ENCODE measurements at regions of chr11 and their contacts with region 1.

Region 1: GRCh38 chr11:28274216-28274615 is 166.0 kb downstream of the METTL15 start:
- DNase-seq: no peak
- ATAC-seq: no peak
- H3K4me3 ChIP-seq: no peak overlapping the region
- H3K27ac ChIP-seq: no peak overlapping the region
- H3K4me1 ChIP-seq: no peaks in the 10 kb centered on the region
- H3K27me3 ChIP-seq: no peaks in the 10 kb centered on the region
- CTCF ChIP-seq: no peak
- POLR2A ChIP-seq: no peak

Region 2: GRCh38 chr11:28350216-28350615 is 76.0 kb after region 1 on chr11:
- in situ Hi-C with region 1: no loop called
- intact Hi-C with region 1: loop called (anchors 2 kb)
- DNase-seq: no peak
- ATAC-seq: no peak
- H3K4me3 ChIP-seq: no peak overlapping the region
- H3K27ac ChIP-seq: no peak overlapping the region
- H3K4me1 ChIP-seq: no peaks in the 10 kb centered on the region
- H3K27me3 ChIP-seq: no peaks in the 10 kb centered on the region
- CTCF ChIP-seq: no peak
- POLR2A ChIP-seq: no peak

Measured in gastrocnemius medialis (tissue), 4 donors.